ENCODE measurements at regions of chr2 and their contacts with region 1.

Region 1: GRCh38 chr2:223970343-223971128 is 13.3 kb downstream of the MRPL44 start:
- DNase-seq: peak; percentile 61
- ATAC-seq: peak; percentile 64
- H3K4me3 Mint-ChIP-seq: no peak overlapping the region
- H3K27ac Mint-ChIP-seq: no peak overlapping the region
- H3K4me1 Mint-ChIP-seq: peaks cover 1% of the 10 kb centered on the region
- H3K27me3 Mint-ChIP-seq: no peaks in the 10 kb centered on the region

Region 2: DNA sequence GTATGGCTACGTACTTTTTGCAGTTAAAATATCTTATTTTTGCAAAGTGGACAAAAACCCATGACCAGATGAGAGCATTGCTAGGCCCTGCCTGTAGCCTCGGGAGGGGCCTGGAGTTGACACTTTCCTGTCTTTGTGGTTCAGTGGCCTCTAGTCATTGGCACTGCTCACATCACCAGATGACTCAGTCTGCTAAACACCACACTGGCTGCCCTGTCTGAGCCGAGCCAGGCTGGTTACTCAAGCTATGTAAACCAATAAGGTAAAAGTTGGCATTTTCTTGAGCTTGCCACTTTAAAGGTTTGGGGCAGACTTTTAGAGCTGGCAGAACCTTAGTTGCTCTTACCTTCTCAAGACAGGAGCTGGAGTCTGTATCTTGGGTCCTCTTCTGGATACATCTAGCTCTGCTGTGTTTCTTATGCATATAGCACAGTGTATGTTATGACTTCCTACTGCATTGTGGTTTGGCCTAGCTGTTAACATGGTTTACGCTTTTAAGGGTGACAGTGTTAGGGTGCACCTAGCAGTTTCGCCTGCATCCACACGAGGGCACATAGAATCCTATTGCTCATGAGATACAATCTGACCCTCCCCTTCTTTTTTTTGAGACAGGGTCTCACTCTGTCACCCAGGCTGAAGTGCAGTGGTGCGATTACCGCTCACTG is 209.6 kb before region 1 on chr2:
- CTCF ChIA-PET with region 1: interaction called, 10 read pairs
- DNase-seq: peak; percentile 94
- ATAC-seq: peak; percentile 94
- H3K4me3 Mint-ChIP-seq: peak overlapping the region; percentile 36
- H3K27ac Mint-ChIP-seq: peak overlapping the region; percentile 95
- H3K4me1 Mint-ChIP-seq: peaks cover 37% of the 10 kb centered on the region
- H3K27me3 Mint-ChIP-seq: no peaks in the 10 kb centered on the region

Region 3: DNA sequence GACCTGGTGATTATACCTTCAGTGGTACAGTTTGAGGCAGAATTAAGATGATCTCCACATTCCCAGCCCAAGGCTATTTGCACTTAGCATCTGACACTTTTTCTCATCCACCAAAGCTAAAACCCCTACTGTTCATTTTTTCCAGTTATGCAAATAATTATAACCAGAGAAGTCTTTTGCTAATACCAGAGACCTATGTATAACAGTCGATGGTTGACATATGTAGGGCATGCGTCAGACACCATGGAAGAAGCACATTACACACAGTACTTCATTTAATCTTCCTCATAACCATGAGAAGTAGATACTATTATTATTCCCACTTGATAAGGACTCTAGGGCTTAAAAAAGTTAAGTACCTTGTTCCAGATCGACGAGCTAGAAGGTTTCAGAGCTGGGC is 169.6 kb before region 1 on chr2:
- CTCF ChIA-PET with region 1: no interaction called
- DNase-seq: no peak
- ATAC-seq: no peak
- H3K4me3 Mint-ChIP-seq: no peak overlapping the region
- H3K27ac Mint-ChIP-seq: no peak overlapping the region
- H3K4me1 Mint-ChIP-seq: peaks cover 26% of the 10 kb centered on the region
- H3K27me3 Mint-ChIP-seq: no peaks in the 10 kb centered on the region

Region 4: DNA sequence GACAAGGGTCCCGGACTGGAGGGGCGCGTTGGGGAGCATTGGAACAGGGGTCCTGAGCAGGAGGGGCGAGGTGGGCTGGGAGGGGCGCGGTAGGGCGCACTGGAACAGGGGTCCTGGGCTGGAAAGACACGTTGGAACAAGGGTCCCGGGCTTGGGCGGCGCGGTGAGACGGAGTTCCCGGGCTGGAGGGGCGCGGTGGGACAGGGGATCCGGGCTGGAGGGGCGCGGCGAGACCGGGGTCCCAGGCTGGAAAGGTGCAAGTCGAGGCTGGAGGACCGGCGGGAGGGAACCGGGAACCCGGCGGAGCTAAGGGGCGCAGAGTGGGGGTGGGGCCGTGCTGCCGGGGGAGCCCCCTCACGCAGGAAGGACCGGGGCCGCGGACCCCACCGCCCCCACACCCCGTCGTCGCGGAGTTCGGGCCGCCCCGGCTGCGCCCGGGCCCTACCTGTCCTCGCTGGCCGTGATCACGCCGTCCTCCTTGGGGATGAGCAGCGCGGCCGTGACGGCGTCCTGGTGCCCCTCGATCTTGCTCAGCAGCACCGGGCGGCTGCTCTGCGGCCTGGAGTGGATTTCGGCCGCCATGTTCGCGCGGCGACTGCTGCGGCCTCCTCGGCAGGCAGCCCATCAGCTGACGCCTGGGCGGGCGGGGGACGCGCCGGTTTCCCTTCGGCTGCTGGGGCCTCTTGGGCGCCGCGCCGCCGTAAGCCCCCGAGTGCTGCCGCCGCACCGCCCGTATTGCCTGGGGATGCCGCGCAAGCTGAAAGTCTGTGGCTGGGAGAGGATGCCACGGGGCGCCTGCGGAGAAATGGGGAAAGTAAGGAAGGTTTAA is 25.6 kb before region 1 on chr2 and contains the start of gene WDFY1:
- CTCF ChIA-PET with region 1: interaction called, 10 read pairs
- DNase-seq: peak; percentile 90
- ATAC-seq: peak; percentile 82
- H3K4me3 Mint-ChIP-seq: peak within 1 kb of the TSS; percentile 94
- H3K27ac Mint-ChIP-seq: peak within 1 kb of the TSS; percentile 90
- H3K4me1 Mint-ChIP-seq: peaks cover 54% of the 10 kb centered on the region
- H3K27me3 Mint-ChIP-seq: no peaks in the 10 kb centered on the region
- total RNA-seq, gene WDFY1: 29.2 to 55.0 TPM

Region 5: GRCh38 chr2:223957092-223957851 is 13.3 kb before region 1 on chr2 and contains the start of gene MRPL44:
- CTCF ChIA-PET with region 1: interaction called, 40 read pairs
- DNase-seq: peak; percentile 96
- ATAC-seq: peak; percentile 100
- H3K4me3 Mint-ChIP-seq: peak within 1 kb of the TSS; percentile 95
- H3K27ac Mint-ChIP-seq: peak within 1 kb of the TSS; percentile 92
- H3K4me1 Mint-ChIP-seq: peaks cover 58% of the 10 kb centered on the region
- H3K27me3 Mint-ChIP-seq: no peaks in the 10 kb centered on the region
- total RNA-seq, gene MRPL44: 30.4 to 34.9 TPM

Region 6: GRCh38 chr2:223993621-223994232 is 23.2 kb after region 1 on chr2:
- CTCF ChIA-PET with region 1: interaction called, 57 read pairs
- DNase-seq: peak; percentile 75
- ATAC-seq: peak; percentile 79
- H3K4me3 Mint-ChIP-seq: no peak overlapping the region
- H3K27ac Mint-ChIP-seq: no peak overlapping the region
- H3K4me1 Mint-ChIP-seq: peaks cover 11% of the 10 kb centered on the region
- H3K27me3 Mint-ChIP-seq: no peaks in the 10 kb centered on the region

Region 7: GRCh38 chr2:224284134-224284946 is 313.8 kb after region 1 on chr2:
- CTCF ChIA-PET with region 1: interaction called, 103 read pairs
- DNase-seq: no peak
- ATAC-seq: peak; percentile 33
- H3K4me3 Mint-ChIP-seq: no peak overlapping the region
- H3K27ac Mint-ChIP-seq: no peak overlapping the region
- H3K4me1 Mint-ChIP-seq: no peaks in the 10 kb centered on the region
- H3K27me3 Mint-ChIP-seq: peaks cover 42% of the 10 kb centered on the region

Region 8: DNA sequence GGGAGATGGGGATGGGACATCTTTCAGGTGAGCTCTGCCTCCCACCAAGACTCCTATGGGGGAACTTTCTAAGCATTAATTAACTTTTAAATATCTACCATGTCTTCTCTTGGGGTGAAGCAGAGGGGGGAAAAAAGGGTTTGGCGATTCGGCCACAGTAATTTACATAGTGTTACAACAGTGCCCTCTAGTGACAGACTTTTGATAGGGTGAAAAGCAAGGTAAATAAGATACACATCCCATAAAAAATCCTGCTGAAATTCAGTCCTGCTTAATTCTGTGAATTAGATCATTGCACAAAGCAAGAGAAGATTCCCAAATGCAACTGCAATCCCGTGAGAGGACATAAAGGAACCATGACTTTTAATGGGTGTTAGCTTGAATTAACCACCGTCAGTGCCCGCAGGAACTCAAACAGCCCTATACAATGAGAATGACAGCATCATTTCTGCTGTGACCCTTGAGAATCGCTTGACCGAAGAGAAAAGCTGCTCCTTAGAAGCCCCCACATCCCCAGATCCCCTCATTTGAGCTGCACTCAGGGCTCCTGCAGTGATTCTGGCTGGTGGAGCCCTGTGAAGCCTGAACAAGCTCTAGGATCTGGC is 398.6 kb after region 1 on chr2:
- CTCF ChIA-PET with region 1: interaction called, 10 read pairs
- DNase-seq: no peak
- ATAC-seq: no peak
- H3K4me3 Mint-ChIP-seq: no peak overlapping the region
- H3K27ac Mint-ChIP-seq: no peak overlapping the region
- H3K4me1 Mint-ChIP-seq: no peaks in the 10 kb centered on the region
- H3K27me3 Mint-ChIP-seq: no peaks in the 10 kb centered on the region

Measured in activated CD8-positive, alpha-beta memory T cell treated with anti-CD3 and anti-CD28 coated beads, Interleukin-2, amount 10 ng/mL, durations not matched to agents 7 days and 5 days (primary cell).